RWPE1 (cell line): ENCODE measurements at regions of chr12 and their contacts with region 1.

Region 1: DNA sequence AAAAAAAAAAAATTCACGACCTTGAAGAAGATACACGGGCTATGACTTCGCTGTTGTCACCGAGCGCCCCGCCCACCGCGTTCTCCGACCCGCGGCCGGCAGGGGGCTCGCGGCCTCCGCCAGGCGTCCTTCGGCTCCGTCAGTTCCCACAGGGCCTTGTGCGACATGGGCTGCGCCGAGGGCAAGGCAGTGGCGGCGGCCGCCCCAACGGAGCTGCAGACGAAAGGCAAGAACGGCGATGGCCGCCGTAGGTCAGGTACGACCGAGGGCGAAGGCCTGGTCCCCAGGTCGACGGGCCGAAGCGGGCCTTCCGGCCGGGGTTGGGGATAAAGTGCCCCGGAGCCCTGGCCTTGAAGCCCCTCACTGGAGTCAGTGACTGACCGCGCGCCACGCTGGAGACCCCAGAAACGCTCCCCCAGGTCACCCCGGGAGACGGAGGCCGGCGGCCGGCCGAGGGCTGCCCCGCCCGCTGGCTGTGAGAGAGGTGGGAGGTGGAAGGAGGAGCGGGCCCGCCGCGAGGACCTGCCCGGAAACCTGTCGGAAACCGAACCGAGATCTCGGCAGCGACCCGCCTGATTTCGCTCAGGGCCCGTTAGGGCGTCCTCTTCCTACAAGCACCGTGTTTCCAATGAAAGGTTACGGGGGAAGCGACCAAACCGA is at the start of gene TXNRD1:
- DNase-seq: peak; percentile 72
- H3K27ac ChIP-seq: peak within 1 kb of the TSS; percentile 61
- CTCF ChIP-seq: peak; percentile 89

Region 2: DNA sequence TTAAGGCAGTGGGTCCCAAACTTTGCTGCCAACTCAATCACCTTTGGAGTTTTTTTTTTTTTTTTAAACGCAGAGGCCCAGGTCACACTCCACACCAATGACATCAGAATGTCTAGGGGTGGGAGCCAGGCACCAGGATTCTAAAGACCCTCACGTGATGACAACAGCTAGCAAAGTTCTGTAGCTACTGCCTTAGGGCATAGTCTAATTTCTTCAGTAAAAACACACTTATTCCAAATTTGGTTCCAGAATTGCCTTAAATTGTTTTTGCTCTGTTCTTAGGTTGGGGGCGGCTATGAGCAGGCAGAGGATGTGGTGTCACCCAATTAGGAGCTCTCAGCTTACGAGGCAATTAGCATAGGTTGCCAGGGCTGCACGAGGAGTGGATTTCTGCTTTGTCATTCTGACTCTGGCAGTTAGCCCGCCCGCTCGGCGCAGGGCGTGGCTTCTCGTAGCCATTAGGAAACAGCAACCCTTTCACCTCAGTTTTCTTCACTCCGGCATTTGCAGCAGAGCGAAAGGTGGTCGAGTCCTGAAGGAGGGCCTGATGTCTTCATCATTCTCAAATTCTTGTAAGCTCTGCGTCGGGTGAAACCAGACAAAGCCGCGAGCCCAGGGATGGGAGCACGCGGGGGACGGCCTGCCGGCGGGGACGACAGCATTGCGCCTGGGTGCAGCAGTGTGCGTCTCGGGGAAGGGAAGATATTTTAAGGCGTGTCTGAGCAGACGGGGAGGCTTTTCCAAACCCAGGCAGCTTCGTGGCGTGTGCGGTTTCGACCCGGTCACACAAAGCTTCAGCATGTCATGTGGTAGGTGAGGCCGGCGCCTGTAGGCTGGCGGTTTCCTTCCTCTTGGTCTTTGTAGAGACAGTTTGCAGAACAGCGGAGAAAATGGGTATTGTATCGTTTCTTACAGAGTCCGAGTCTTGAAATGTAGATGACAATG is 71.0 kb after region 1 on chr12:
- CTCF ChIA-PET with region 1: interaction called, 9 read pairs
- POLR2A ChIA-PET with region 1: interaction called, 11 read pairs
- DNase-seq: peak; percentile 87
- H3K27ac ChIP-seq: peak overlapping the region; percentile 98
- CTCF ChIP-seq: no peak

Region 3: DNA sequence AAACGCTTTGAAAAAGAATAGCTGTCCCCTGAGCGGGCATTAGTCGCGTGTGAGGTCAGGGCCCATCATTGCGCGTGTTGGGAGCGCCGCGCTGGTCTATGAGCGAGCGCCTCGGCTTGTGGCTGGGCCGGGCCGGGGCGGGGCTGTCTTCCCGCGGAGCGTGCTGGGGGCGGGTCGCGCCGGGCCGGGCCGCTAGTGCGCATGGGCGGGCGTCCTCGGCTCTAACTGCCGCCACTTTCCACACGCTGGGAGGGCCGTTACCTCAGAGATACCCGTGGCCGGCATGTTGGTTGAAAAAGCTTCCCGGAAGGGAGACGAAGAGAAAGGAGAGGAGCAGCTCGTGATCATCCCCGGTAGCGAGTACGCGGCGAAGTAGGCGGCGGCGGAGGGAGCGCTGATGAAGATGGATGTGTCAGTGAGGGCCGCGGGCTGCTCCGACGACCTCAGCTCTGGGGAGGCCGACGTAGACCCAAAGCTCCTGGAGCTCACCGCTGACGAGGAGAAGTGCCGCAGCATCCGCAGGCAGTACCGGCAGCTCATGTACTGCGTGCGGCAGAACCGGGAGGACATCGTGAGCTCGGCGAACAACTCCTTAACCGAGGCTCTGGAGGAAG is 87.9 kb after region 1 on chr12 and contains the start of gene EID3:
- CTCF ChIA-PET with region 1: interaction called, 10 read pairs
- POLR2A ChIA-PET with region 1: no interaction called
- DNase-seq: peak; percentile 74
- H3K27ac ChIP-seq: peak within 1 kb of the TSS; percentile 60
- CTCF ChIP-seq: no peak